Lower leg skin (tissue), 4 donors: ENCODE measurements at regions of chr9 and their contacts with region 1.

Region 1: GRCh38 chr9:16039988-16040761 is 487.3 kb downstream of the CCDC171 start:
- DNase-seq: no peak
- H3K4me3 ChIP-seq: no peak overlapping the region
- CTCF ChIP-seq: no peak
- POLR2A ChIP-seq: no peak

Region 2: DNA sequence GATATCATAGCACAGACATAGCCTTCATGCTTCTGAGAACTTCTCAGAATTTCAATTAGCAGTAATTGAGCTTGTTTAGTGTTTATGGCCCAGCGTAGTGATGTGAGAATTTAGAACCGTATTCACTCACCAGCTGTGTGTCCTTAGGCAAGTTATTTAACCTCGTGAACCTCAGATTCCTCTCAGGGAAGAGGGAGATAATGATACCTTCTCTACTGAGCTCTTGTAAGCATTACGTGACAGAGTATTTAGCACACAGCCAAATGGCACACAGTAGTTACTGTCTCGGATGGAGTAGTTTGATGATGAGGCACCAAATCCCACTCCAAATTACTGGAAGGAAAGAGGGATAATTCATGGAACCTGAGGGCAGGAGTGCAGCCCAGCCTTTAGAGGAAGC is 58.0 kb before region 1 on chr9:
- intact Hi-C with region 1: loop called (anchors 10 kb)
- DNase-seq: no peak
- H3K4me3 ChIP-seq: no peak overlapping the region
- CTCF ChIP-seq: no peak
- POLR2A ChIP-seq: no peak

Region 3: DNA sequence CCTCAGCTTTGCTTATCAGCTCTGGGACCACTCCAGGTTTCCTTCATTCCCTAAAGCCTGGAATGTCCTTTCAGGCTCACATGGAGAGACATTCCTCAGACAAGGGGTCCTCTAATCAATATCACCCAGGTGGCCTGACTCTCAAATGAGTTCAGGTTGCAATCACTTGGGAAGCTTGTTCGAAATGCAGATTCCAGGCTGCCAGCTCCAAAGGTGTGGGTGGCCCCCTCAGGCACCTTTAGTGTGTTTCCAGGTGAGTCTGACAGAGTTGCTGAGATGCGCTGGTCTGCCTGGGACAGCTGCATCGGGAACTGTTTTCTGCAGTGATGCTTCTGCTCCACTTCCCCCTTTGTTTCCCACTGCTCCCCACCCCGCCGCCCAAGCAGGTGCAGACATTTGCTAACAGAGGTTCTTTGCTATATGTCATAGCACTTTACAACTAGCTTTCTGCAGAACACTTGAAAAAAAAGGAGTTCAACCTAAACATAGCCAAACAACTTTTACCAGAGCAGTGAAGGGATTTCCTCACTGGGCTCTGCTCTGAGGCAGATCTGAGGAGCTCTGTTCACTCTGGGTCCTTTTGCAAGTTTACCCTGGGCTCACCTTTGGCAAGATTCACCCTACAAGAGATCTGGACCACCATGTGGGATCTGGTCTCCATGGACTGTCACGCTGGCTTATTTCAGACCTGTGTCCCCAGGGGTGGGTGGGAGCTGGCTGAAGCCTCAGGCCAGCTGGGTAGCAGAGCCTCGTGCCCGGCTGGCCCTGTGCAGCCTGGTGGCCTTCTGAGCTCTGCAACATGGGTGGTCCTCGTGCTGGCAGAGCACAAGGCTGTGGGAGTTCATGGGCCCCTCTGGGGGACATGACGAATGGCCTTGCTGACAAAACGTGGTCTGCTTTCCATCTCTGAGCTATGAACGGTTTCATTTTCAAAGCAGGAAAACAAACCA is 52.2 kb after region 1 on chr9:
- intact Hi-C with region 1: no loop called
- DNase-seq: no peak
- H3K4me3 ChIP-seq: no peak overlapping the region
- CTCF ChIP-seq: no peak
- POLR2A ChIP-seq: no peak

Region 4: GRCh38 chr9:16475257-16475656 is 435.1 kb after region 1 on chr9:
- intact Hi-C with region 1: no loop called
- DNase-seq: no peak
- H3K4me3 ChIP-seq: no peak overlapping the region
- CTCF ChIP-seq: no peak
- POLR2A ChIP-seq: no peak